ENCODE measurements at regions of chr18 and their contacts with region 1.

Region 1: DNA sequence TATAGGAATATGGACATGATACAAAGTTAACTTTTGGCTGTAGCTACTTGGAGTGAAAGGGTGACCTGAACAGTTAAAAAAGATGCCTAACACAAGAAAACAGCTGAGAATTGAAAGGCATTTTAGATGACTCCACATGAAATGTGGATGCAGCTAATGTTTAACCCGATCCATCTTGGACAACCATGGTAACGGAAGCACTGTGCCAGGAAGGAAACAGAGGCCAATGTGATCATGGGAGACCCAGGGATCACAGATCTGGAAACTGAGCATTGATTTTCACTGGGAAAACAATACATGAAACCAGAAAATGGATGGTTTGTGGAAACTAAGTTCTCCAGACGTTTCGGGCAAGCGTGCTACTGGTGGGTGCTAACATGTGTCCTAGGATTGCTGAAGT is 669.1 kb downstream of the GALR1 start:
- DNase-seq: no peak
- ATAC-seq: no peak
- H3K4me3 Mint-ChIP-seq: no peak overlapping the region
- H3K27ac Mint-ChIP-seq: no peak overlapping the region
- H3K4me1 Mint-ChIP-seq: no peaks in the 10 kb centered on the region
- H3K27me3 Mint-ChIP-seq: peaks cover 2% of the 10 kb centered on the region
- CTCF ChIP-seq: no peak

Region 2: GRCh38 chr18:77899972-77900754 is 18.6 kb before region 1 on chr18:
- CTCF ChIA-PET with region 1: interaction called, 10 read pairs
- POLR2A ChIA-PET with region 1: no interaction called
- intact Hi-C with region 1: no loop called
- DNase-seq: peak; percentile 67
- ATAC-seq: peak; percentile 99
- H3K4me3 Mint-ChIP-seq: peak overlapping the region; percentile 19
- H3K27ac Mint-ChIP-seq: no peak overlapping the region
- H3K4me1 Mint-ChIP-seq: peaks cover 5% of the 10 kb centered on the region
- H3K27me3 Mint-ChIP-seq: peaks cover 20% of the 10 kb centered on the region
- CTCF ChIP-seq: peak; percentile 60

Region 3: GRCh38 chr18:77960791-77961410 is 42.2 kb after region 1 on chr18:
- CTCF ChIA-PET with region 1: no interaction called
- POLR2A ChIA-PET with region 1: no interaction called
- intact Hi-C with region 1: no loop called
- DNase-seq: no peak
- ATAC-seq: no peak
- H3K4me3 Mint-ChIP-seq: no peak overlapping the region
- H3K27ac Mint-ChIP-seq: no peak overlapping the region
- H3K4me1 Mint-ChIP-seq: no peaks in the 10 kb centered on the region
- H3K27me3 Mint-ChIP-seq: no peaks in the 10 kb centered on the region
- CTCF ChIP-seq: no peak

Measured in activated CD8-positive, alpha-beta T cell treated with anti-CD3 and anti-CD28 coated beads for 36 hours (primary cell).